ENCODE measurements at regions of chr11 and their contacts with region 1.

Region 1: GRCh38 chr11:12235947-12236743 is 125.8 kb downstream of the MICAL2 start:
- DNase-seq: peak in 23 of 35 experiments; percentile 8 to 74 (median 25)
- ATAC-seq: peak; percentile 79 to 89 (median 86)
- H3K4me3 ChIP-seq: peak overlapping the region in 1 of 2 donors; percentile 14
- H3K4me3 Mint-ChIP-seq: peak overlapping the region; percentile 17 to 64 (median 62)
- H3K27ac ChIP-seq: peak overlapping the region; percentile 67
- H3K27ac Mint-ChIP-seq: peak overlapping the region; percentile 91 to 92
- H3K4me1 ChIP-seq: peaks cover 13 to 26% of the 10 kb centered on the region in 2 experiments
- H3K4me1 Mint-ChIP-seq: peaks cover 18 to 28% (median 20%) of the 10 kb centered on the region in 3 donors
- H3K27me3 ChIP-seq: no peaks in the 10 kb centered on the region
- H3K27me3 Mint-ChIP-seq: no peaks in the 10 kb centered on the region

Region 2: DNA sequence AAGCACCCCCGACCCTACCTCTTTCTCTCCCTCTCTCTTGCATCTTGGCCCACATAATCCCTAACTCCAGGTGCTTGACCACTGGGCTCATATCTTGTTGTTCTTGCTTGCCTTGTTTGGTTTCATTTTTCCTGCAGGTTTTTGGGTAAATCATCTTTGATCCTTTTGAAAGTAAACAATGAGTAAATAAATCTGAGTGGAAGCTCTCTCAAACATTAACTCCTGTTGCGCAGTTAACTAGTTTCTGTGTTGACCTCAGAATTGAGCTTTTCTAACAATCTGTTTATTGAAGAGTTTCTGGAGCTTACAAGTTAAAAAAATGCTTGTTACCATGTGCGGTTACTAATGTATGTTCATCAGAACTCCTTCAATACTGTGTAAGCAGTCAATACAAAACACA is 164.6 kb before region 1 on chr11:
- CTCF ChIA-PET with region 1: interaction called in 1 of 2 experiments, 10 read pairs
- POLR2A ChIA-PET with region 1: no interaction called
- DNase-seq: no peak
- ATAC-seq: no peak
- H3K4me3 ChIP-seq: no peak overlapping the region
- H3K4me3 Mint-ChIP-seq: no peak overlapping the region
- H3K27ac ChIP-seq: no peak overlapping the region
- H3K27ac Mint-ChIP-seq: no peak overlapping the region
- H3K4me1 ChIP-seq: peaks cover 0 to 11% of the 10 kb centered on the region in 2 experiments
- H3K4me1 Mint-ChIP-seq: peaks cover 0 to 5% (median 4%) of the 10 kb centered on the region in 3 donors
- H3K27me3 ChIP-seq: peaks cover 0 to 10% of the 10 kb centered on the region in 2 experiments
- H3K27me3 Mint-ChIP-seq: peaks cover 0 to 6% of the 10 kb centered on the region in 2 donors

Region 3: DNA sequence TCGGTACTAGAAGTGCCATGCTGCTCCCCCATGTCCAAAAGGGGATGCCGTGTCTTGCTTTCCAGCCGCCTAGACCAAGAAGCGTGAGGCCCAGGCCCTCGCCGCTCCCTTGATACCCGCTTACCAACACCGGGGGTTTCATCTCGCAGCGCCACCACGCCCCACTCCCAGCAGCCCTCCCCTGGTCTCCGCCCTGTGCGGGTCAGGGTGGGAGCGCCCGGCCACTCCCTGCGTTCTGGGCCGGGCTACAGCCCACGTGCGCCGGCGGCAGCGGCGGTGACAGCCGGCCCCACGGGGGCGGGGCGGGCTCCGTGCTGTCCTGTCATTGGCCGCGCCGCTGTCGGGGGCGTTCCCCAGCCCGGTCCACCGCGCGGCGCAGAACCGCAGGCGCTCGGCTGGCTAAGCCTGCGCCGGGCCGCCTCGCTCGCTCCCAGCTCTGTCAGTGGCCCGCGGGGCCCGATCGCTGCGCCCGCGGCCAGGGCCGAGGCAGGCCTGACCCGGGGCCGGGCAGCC is 125.9 kb before region 1 on chr11 and contains the start of gene MICAL2:
- CTCF ChIA-PET with region 1: interaction called in 1 of 2 experiments, 11 read pairs
- POLR2A ChIA-PET with region 1: no interaction called
- DNase-seq: peak; percentile 53 to 91 (median 75)
- ATAC-seq: peak; percentile 97 to 98 (median 98)
- H3K4me3 ChIP-seq: peak within 1 kb of the TSS; percentile 58 to 63
- H3K4me3 Mint-ChIP-seq: peak within 1 kb of the TSS; percentile 73 to 83 (median 81)
- H3K27ac ChIP-seq: no peak within 1 kb of the TSS
- H3K27ac Mint-ChIP-seq: peak within 1 kb of the TSS in 1 of 2 donors; percentile 55
- H3K4me1 ChIP-seq: peaks cover 8 to 29% of the 10 kb centered on the region in 2 experiments
- H3K4me1 Mint-ChIP-seq: peaks cover 20 to 27% (median 27%) of the 10 kb centered on the region in 3 donors
- H3K27me3 ChIP-seq: peaks cover 0 to 3% of the 10 kb centered on the region in 2 experiments
- H3K27me3 Mint-ChIP-seq: no peaks in the 10 kb centered on the region
- total RNA-seq, gene MICAL2: 13.7 to 38.7 (median 22.9) TPM

Region 4: GRCh38 chr11:12216671-12217374 is 19.3 kb before region 1 on chr11:
- CTCF ChIA-PET with region 1: interaction called in 1 of 2 experiments, 10 read pairs
- POLR2A ChIA-PET with region 1: no interaction called
- DNase-seq: no peak
- ATAC-seq: peak in 1 of 4 experiments; percentile 16
- H3K4me3 ChIP-seq: no peak overlapping the region
- H3K4me3 Mint-ChIP-seq: no peak overlapping the region
- H3K27ac ChIP-seq: peak overlapping the region; percentile 64
- H3K27ac Mint-ChIP-seq: peak overlapping the region in 1 of 2 donors; percentile 22
- H3K4me1 ChIP-seq: peaks cover 1 to 30% of the 10 kb centered on the region in 2 experiments
- H3K4me1 Mint-ChIP-seq: peaks cover 18 to 34% (median 23%) of the 10 kb centered on the region in 3 donors
- H3K27me3 ChIP-seq: no peaks in the 10 kb centered on the region
- H3K27me3 Mint-ChIP-seq: no peaks in the 10 kb centered on the region

Region 5: GRCh38 chr11:12224537-12224893 is 11.6 kb before region 1 on chr11:
- CTCF ChIA-PET with region 1: interaction called, 4 to 35 read pairs
- POLR2A ChIA-PET with region 1: interaction called, 4 to 9 read pairs
- DNase-seq: peak; percentile 74 to 94 (median 88)
- ATAC-seq: peak; percentile 94 to 96 (median 95)
- H3K4me3 ChIP-seq: peak overlapping the region in 1 of 2 donors; percentile 35
- H3K4me3 Mint-ChIP-seq: peak overlapping the region; percentile 59 to 85 (median 62)
- H3K27ac ChIP-seq: peak overlapping the region; percentile 70
- H3K27ac Mint-ChIP-seq: peak overlapping the region; percentile 94 to 96
- H3K4me1 ChIP-seq: peaks cover 21 to 52% of the 10 kb centered on the region in 2 experiments
- H3K4me1 Mint-ChIP-seq: peaks cover 47 to 52% (median 51%) of the 10 kb centered on the region in 3 donors
- H3K27me3 ChIP-seq: no peaks in the 10 kb centered on the region
- H3K27me3 Mint-ChIP-seq: no peaks in the 10 kb centered on the region

Region 6: DNA sequence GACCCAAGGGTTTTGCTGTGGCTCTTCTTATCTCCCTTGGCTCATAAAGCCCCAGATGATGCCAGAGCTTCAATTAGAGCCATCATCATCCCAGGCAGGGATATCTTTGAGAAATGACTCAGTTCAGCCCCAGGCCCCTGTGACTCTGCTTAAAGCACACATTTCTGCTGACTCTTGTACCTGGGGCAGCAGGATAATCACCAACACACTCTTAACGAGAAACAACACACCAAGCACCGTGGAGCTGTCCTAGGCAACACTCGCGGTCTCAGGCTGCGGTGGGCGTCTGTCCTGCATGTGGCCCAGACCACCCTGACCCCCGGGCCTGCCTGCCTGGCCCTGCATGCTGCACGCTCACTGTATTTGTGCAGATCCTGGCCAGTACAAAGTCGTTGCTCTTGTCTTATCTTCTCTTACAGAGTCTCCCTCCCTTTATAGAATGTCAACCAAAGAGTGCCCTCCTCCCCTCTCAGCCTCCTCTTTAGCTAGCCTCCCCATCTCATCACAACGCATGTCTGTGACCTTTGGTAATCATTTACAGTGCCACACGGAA is 27.1 kb after region 1 on chr11:
- CTCF ChIA-PET with region 1: no interaction called
- POLR2A ChIA-PET with region 1: no interaction called
- DNase-seq: no peak
- ATAC-seq: no peak
- H3K4me3 ChIP-seq: no peak overlapping the region
- H3K4me3 Mint-ChIP-seq: no peak overlapping the region
- H3K27ac ChIP-seq: no peak overlapping the region
- H3K27ac Mint-ChIP-seq: no peak overlapping the region
- H3K4me1 ChIP-seq: no peaks in the 10 kb centered on the region
- H3K4me1 Mint-ChIP-seq: no peaks in the 10 kb centered on the region
- H3K27me3 ChIP-seq: no peaks in the 10 kb centered on the region
- H3K27me3 Mint-ChIP-seq: no peaks in the 10 kb centered on the region

Region 7: DNA sequence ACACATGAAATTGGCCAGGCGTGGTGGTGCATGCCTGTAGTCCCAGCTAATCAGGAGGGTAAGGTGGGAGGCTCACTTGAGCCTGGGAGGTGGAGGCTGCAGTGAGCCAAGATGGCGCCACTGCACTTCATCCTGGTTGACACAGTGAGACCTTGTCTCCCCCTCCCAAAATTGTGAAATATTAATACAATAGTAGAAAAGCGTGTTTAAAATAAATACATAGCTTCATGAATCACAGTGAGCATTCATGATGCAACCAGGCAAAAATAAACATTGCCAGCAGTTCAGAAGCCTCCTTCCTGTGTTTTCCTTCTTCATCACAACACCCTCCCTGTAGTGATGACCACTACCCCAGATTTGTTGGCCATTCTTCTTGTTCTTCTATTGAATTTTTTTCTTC is 433.8 kb after region 1 on chr11:
- CTCF ChIA-PET with region 1: no interaction called
- POLR2A ChIA-PET with region 1: no interaction called
- DNase-seq: no peak
- ATAC-seq: no peak
- H3K4me3 ChIP-seq: no peak overlapping the region
- H3K4me3 Mint-ChIP-seq: no peak overlapping the region
- H3K27ac ChIP-seq: no peak overlapping the region
- H3K27ac Mint-ChIP-seq: no peak overlapping the region
- H3K4me1 ChIP-seq: peaks cover 6 to 11% of the 10 kb centered on the region in 2 experiments
- H3K4me1 Mint-ChIP-seq: peaks cover 5 to 16% (median 10%) of the 10 kb centered on the region in 3 donors
- H3K27me3 ChIP-seq: peaks cover 18 to 27% of the 10 kb centered on the region in 2 experiments
- H3K27me3 Mint-ChIP-seq: peaks cover 64 to 70% of the 10 kb centered on the region in 2 donors